ENCODE measurements at regions of chr11 and their contacts with region 1.

Region 1: GRCh38 chr11:63614136-63614664 is at the start of gene PLAAT3:
- DNase-seq: peak; percentile 54
- ATAC-seq: peak; percentile 55
- H3K4me3 ChIP-seq: peak within 1 kb of the TSS; percentile 9 to 67 (median 52)
- H3K4me3 Mint-ChIP-seq: peak within 1 kb of the TSS; percentile 87
- H3K27ac ChIP-seq: peak within 1 kb of the TSS in 1 of 2 donors; percentile 46
- H3K27ac Mint-ChIP-seq: no peak within 1 kb of the TSS
- H3K4me1 ChIP-seq: peaks cover 16 to 17% of the 10 kb centered on the region in 2 donors
- H3K4me1 Mint-ChIP-seq: peaks cover 17% of the 10 kb centered on the region
- H3K27me3 ChIP-seq: peaks cover 0 to 18% (median 7%) of the 10 kb centered on the region in 4 experiments
- H3K27me3 Mint-ChIP-seq: peaks cover 17% of the 10 kb centered on the region
- CTCF ChIP-seq: no peak
- total RNA-seq, gene PLAAT3: 0.95 and 2.3 TPM in 2 replicates

Region 2: DNA sequence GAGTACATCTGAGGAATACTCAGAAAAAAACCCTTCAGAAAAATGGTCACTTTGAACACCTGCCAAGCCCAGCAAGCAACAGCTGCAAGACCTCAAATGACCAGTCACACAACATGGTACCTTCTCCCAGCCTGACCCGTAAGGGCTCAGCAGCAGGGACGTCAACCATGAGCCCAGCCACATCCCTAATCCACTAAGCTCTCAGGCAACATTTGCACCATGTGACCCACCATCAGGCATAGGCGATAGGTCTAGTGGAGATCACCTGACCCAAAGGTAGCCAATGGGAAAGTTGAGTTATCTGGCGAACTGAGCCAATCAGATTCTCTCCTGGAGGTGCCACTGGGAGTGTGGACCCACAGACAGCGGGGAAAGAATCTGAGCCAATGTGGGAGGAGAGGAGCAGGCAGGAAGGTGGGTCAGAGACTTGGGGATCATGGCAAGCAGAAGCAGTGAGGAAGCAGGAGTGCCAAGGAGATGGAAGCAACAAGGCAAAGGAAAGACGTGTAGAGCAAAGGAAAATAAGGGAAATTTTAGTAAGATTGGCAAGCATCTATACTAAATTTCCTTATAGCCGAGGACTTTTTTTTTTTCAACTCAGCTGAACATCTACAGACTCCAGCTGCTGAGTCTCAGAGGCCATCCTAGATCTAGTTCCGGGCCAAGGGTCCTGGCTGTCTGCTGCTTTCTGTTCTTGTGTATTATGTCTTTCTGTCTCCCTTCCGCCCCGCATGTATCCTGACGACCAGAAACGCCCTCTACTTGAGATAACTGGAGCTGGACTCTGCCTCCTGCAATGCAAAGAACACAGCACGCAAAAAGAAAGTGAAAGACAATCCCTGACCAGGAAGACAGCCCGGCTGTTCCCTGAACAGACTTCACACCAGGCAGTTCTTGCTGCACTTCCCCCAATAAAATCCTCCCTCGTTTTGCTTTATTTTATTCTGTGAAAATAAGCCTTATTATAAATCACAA is 40.0 kb before region 1 on chr11:
- CTCF ChIA-PET with region 1: no interaction called
- POLR2A ChIA-PET with region 1: no interaction called
- intact Hi-C with region 1: loop called (anchors 5 kb)
- DNase-seq: peak; percentile 55
- ATAC-seq: peak; percentile 5
- H3K4me3 ChIP-seq: peak overlapping the region in 4 of 5 experiments; percentile 18 to 54 (median 40)
- H3K4me3 Mint-ChIP-seq: peak overlapping the region; percentile 83
- H3K27ac ChIP-seq: no peak overlapping the region
- H3K27ac Mint-ChIP-seq: peak overlapping the region; percentile 41
- H3K4me1 ChIP-seq: peaks cover 20 to 32% of the 10 kb centered on the region in 2 donors
- H3K4me1 Mint-ChIP-seq: peaks cover 22% of the 10 kb centered on the region
- H3K27me3 ChIP-seq: no peaks in the 10 kb centered on the region
- H3K27me3 Mint-ChIP-seq: peaks cover 3% of the 10 kb centered on the region
- CTCF ChIP-seq: no peak

Region 3: GRCh38 chr11:63671322-63672155 is 57.3 kb after region 1 on chr11 and contains the start of gene ATL3:
- CTCF ChIA-PET with region 1: no interaction called
- POLR2A ChIA-PET with region 1: no interaction called
- intact Hi-C with region 1: no loop called
- DNase-seq: peak; percentile 97
- ATAC-seq: peak; percentile 92
- H3K4me3 ChIP-seq: peak within 1 kb of the TSS; percentile 22 to 81 (median 78)
- H3K4me3 Mint-ChIP-seq: peak within 1 kb of the TSS; percentile 88
- H3K27ac ChIP-seq: peak within 1 kb of the TSS; percentile 62 to 73
- H3K27ac Mint-ChIP-seq: peak within 1 kb of the TSS; percentile 92
- H3K4me1 ChIP-seq: peaks cover 9 to 13% of the 10 kb centered on the region in 2 donors
- H3K4me1 Mint-ChIP-seq: peaks cover 22% of the 10 kb centered on the region
- H3K27me3 ChIP-seq: no peaks in the 10 kb centered on the region
- H3K27me3 Mint-ChIP-seq: no peaks in the 10 kb centered on the region
- CTCF ChIP-seq: no peak
- total RNA-seq, gene ATL3: 33.8 and 36.5 TPM in 2 replicates

Region 4: GRCh38 chr11:63845303-63845702 is 231.1 kb after region 1 on chr11:
- CTCF ChIA-PET with region 1: no interaction called
- POLR2A ChIA-PET with region 1: no interaction called
- intact Hi-C with region 1: no loop called
- DNase-seq: no peak
- ATAC-seq: no peak
- H3K4me3 ChIP-seq: no peak overlapping the region
- H3K4me3 Mint-ChIP-seq: no peak overlapping the region
- H3K27ac ChIP-seq: peak overlapping the region in 1 of 2 donors; percentile 43
- H3K27ac Mint-ChIP-seq: no peak overlapping the region
- H3K4me1 ChIP-seq: peaks cover 25 to 33% of the 10 kb centered on the region in 2 donors
- H3K4me1 Mint-ChIP-seq: peaks cover 63% of the 10 kb centered on the region
- H3K27me3 ChIP-seq: no peaks in the 10 kb centered on the region
- H3K27me3 Mint-ChIP-seq: no peaks in the 10 kb centered on the region
- CTCF ChIP-seq: no peak